ENCODE measurements at regions of chr15 and their contacts with region 1.

Region 1: DNA sequence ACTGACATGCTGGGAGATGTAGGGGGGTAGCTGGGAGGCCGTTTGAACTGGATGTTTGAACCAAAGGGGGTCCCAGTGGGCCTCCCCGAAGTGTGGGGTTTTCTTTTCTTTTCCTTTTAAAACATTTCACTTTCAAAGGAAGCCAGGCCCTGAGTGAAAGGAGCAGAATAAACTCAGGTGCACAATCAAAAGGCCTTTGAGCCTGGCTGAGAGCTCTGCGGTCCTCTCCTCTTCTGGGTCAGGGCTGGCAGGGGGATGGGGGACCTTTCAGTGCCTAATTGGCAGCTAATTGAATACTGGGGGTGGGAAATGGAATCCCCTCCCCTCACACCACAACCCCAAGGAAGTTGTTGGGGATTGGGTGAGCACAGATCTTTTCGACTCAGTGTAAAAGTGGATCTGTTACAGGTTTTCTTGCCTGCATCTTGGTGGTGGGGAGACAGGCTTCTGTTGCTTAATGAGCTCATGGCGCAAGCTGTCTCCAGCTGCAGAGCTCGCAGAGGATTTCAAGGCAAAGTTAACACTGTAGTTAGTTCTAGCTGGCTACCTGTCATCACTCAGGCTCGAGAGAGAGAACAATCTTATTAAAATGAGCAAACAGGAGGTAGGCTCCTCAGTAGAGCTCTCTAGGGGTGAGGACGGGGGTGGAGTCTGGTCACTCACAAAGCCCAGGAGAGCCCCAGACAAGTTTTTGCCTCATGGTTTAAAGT is 132.6 kb downstream of the RAB11A start:
- DNase-seq: no peak
- ATAC-seq: no peak
- H3K4me3 ChIP-seq: no peak overlapping the region
- H3K27ac ChIP-seq: no peak overlapping the region
- H3K4me1 ChIP-seq: no peaks in the 10 kb centered on the region
- H3K27me3 ChIP-seq: peaks cover 0 to 31% (median 15%) of the 10 kb centered on the region in 7 donors
- CTCF ChIP-seq: no peak

Region 2: DNA sequence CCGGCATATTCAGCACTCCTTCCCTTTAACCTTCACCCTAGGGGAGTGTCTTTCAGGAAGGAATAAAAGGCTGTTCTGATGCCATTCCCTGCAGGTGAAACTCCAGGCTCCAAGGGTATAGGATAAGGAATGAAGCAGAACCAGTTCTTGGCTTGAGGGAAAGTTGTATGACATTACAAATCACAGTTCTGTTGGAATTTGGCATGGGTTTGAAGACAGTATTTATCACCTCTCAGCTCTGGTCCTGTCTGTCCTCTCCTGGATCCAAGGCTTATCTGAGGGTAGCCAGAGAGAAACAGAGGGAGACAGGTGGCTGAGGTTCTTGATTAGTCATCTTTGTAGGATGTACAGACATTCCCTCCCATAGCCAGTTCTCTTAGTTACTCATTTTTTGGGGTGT is 95.5 kb before region 1 on chr15:
- intact Hi-C with region 1: no loop called
- DNase-seq: no peak
- ATAC-seq: no peak
- H3K4me3 ChIP-seq: no peak overlapping the region
- H3K27ac ChIP-seq: no peak overlapping the region
- H3K4me1 ChIP-seq: peaks cover 0 to 31% (median 14%) of the 10 kb centered on the region in 9 donors
- H3K27me3 ChIP-seq: no peaks in the 10 kb centered on the region
- CTCF ChIP-seq: no peak

Region 3: DNA sequence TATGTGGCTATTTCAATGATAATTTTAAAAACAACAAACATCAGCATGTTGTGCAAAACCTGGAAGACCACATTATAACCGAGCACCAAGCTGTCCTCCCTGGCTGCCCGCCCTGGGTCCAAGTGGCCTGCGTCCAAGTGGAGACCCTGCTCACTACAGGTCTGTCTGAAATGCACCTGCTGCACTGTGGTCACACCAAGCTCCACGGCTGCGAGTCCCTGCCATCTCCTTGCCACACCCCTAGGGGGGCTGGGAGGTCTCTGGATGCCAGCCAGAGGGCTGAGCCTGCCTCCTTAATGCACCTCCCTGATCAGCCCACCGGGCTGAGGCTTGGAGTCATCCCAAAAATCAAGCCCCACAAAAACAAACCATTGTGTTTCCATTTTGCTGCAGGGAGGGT is 64.6 kb after region 1 on chr15:
- intact Hi-C with region 1: loop called in 1 of 10 experiments (anchors 2 kb)
- DNase-seq: no peak
- ATAC-seq: peak in 2 of 8 donors; percentile 17 to 51
- H3K4me3 ChIP-seq: no peak overlapping the region
- H3K27ac ChIP-seq: no peak overlapping the region
- H3K4me1 ChIP-seq: peaks cover 0 to 5% (median 0%) of the 10 kb centered on the region in 9 donors
- H3K27me3 ChIP-seq: peaks cover 0 to 5% (median 0%) of the 10 kb centered on the region in 7 donors
- CTCF ChIP-seq: no peak

Measured in heart right ventricle (tissue), 16 donors.